ENCODE measurements at regions of chr14 and their contacts with region 1.

Region 1: GRCh38 chr14:100362311-100362927 is 39.3 kb downstream of the SLC25A47 start:
- DNase-seq: no peak
- CTCF ChIP-seq: no peak

Region 2: GRCh38 chr14:100348784-100349704 is 13.4 kb before region 1 on chr14:
- CTCF ChIA-PET with region 1: interaction called, 16 read pairs
- POLR2A ChIA-PET with region 1: no interaction called
- DNase-seq: no peak
- CTCF ChIP-seq: no peak

Region 3: GRCh38 chr14:100375266-100375962 is 13.0 kb after region 1 on chr14:
- CTCF ChIA-PET with region 1: interaction called, 10 read pairs
- POLR2A ChIA-PET with region 1: interaction called, 5 read pairs
- DNase-seq: peak; percentile 77
- CTCF ChIP-seq: no peak

Region 4: GRCh38 chr14:100684961-100685360 is 322.5 kb after region 1 on chr14:
- CTCF ChIA-PET with region 1: no interaction called
- POLR2A ChIA-PET with region 1: interaction called, 11 read pairs
- DNase-seq: no peak
- CTCF ChIP-seq: no peak

Measured in GM10248 (cell line).